ENCODE measurements at regions of chr1 and their contacts with region 1.

Region 1: DNA sequence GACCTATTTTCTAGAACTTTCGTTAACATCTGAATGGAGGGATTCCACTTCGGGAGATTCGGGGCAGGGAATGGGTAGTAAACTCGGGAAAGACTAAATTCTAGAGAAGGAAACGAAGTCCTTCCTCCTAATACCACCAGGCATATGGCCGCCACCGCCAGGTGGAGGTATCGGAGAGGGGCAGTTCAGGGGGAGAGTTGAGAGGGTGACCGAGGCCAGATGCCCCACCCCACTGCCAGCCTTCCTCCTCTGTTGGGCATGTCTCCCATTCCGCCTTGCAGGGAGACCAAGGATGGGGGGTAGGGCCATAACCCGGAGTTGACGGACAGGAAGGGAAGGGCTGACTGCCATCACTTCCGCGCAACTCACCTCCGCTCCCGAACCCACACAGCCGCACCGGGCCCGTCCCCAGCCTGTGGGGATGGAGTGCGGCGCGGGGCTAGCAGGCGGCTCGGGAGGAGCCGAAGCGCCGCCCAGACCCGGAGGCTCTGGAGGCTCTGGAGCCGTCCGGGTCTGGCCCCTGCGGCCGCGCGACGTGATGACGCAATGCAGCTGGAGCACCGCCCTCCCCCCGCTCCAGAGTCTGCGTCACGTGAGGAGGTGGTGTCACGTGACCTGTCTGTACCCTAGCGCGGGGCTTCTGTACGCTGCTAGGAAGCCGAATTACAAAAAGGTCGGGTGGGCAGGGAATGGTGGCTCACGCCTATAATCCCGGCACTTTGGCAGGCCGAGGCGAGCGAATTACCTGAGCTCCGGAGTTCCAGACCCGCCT is at the start of gene KLHL12:
- DNase-seq: peak; percentile 96
- H3K4me3 Mint-ChIP-seq: peak within 1 kb of the TSS; percentile 95
- H3K27ac Mint-ChIP-seq: peak within 1 kb of the TSS; percentile 89
- H3K4me1 Mint-ChIP-seq: peaks cover 24% of the 10 kb centered on the region
- H3K27me3 Mint-ChIP-seq: no peaks in the 10 kb centered on the region
- total RNA-seq, gene KLHL12: 42.5 to 42.6 TPM

Region 2: GRCh38 chr1:202888531-202889360 is 38.2 kb before region 1 on chr1 and contains the start of gene RABIF:
- CTCF ChIA-PET with region 1: no interaction called
- intact Hi-C with region 1: loop called (anchors 1 kb)
- DNase-seq: peak; percentile 97
- H3K4me3 Mint-ChIP-seq: peak within 1 kb of the TSS; percentile 94
- H3K27ac Mint-ChIP-seq: peak within 1 kb of the TSS; percentile 96
- H3K4me1 Mint-ChIP-seq: peaks cover 24% of the 10 kb centered on the region
- H3K27me3 Mint-ChIP-seq: no peaks in the 10 kb centered on the region
- total RNA-seq, gene RABIF: 5.9 to 6.2 TPM

Region 3: DNA sequence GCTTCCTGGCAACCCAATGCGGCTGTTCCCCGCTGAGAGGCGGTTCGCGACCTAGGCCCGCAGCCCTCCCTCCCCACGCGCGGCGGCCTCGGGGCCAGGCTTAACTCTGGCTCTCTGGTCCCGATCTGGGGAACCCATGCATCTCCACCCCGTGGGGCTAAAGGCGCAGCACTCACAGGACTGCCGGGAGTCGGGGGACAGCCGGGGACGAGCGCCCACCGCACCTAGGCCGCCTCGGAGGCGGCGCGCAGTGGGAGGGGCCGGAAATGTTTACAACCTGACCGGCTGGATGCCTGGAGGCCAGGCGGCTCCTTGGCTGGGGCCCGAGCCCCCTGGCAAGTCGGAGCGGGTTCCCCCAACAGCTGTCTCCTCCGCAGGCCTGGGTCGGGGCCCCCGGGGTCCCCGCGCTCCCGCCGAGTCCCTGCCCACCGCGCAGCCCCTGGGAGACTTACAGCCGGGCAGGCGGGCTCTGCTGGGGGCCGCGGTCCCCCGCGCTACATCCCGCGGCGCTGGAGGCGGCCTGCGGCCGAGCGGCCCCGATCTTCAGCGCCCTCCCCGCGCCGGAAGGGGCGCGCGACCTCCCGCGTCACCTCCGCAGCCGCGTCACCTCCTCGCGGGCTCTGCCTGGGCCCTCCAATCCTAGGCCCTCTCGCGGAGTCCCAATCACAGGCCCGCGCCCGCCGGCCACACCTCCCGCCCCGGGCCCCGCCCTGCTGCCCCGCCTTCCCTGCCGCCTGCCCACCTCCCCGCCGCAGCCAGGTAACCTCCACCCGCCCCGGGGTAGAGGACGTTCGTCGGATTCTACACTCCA is 31.0 kb after region 1 on chr1 and contains the start of gene ADIPOR1:
- CTCF ChIA-PET with region 1: no interaction called
- intact Hi-C with region 1: loop called (anchors 1 kb)
- DNase-seq: peak; percentile 94
- H3K4me3 Mint-ChIP-seq: peak within 1 kb of the TSS; percentile 85
- H3K27ac Mint-ChIP-seq: peak within 1 kb of the TSS; percentile 37
- H3K4me1 Mint-ChIP-seq: peaks cover 48% of the 10 kb centered on the region
- H3K27me3 Mint-ChIP-seq: no peaks in the 10 kb centered on the region
- total RNA-seq, gene ADIPOR1: 75.5 to 77.0 TPM

Region 4: GRCh38 chr1:202968840-202969295 is 42.0 kb after region 1 on chr1:
- CTCF ChIA-PET with region 1: interaction called, 5 read pairs
- intact Hi-C with region 1: loop called (anchors 1 kb)
- DNase-seq: peak; percentile 56
- H3K4me3 Mint-ChIP-seq: no peak overlapping the region
- H3K27ac Mint-ChIP-seq: no peak overlapping the region
- H3K4me1 Mint-ChIP-seq: peaks cover 28% of the 10 kb centered on the region
- H3K27me3 Mint-ChIP-seq: no peaks in the 10 kb centered on the region

Region 5: DNA sequence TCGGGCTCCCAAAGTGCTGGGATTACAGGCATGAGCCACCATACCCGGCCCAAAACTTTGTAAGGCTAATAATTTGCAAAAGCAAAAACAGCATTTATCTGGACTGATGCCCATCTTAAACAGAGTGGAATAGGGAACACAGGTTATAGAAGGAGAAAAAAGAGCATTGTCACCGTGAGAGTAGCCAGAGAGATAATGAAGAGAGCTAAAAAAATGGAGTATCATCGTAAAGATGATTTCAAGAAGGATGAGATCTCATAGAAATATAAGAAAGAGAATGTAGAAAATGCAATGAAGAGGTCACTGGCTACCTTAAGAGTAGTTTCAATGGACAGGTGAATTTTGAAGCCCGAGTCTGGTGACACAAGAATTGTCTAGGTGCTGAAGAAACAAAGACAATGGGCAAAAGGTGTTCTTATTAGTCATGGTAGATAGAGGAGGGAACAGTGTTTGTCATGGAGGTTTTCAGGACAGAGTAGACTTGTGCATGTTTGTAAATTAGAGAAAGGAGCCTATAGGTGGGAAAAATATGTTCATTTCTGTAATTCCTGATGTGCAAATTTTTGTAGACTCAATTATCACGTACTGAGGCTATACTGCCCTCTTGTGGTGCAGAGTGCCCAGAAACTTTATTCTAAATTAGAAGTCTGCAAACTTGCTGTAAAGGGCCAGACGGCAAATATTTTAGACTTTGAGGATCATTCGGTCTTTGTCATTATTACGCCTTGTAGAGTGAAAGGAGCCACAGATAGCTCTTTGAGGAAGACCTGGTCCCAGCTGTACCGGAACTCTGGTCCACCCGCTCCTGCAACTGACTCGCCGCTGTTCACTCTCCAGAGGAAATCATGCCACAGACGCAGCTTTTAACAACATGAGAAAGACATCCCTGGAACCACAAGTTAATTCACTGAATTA is 72.2 kb after region 1 on chr1:
- CTCF ChIA-PET with region 1: interaction called, 4 read pairs
- intact Hi-C with region 1: loop called (anchors 1 kb)
- DNase-seq: peak; percentile 83
- H3K4me3 Mint-ChIP-seq: peak overlapping the region; percentile 22
- H3K27ac Mint-ChIP-seq: no peak overlapping the region
- H3K4me1 Mint-ChIP-seq: peaks cover 4% of the 10 kb centered on the region
- H3K27me3 Mint-ChIP-seq: peaks cover 26% of the 10 kb centered on the region

Measured in activated naive CD4-positive, alpha-beta T cell treated with anti-CD3 and anti-CD28 coated beads for 36 hours (primary cell).